HEK293T (cell line): ENCODE measurements at regions of chr2 and their contacts with region 1.

Region 1: GRCh38 chr2:88159955-88160415 is 10.2 kb upstream of the THNSL2 start:
- DNase-seq: peak; percentile 68

Region 2: DNA sequence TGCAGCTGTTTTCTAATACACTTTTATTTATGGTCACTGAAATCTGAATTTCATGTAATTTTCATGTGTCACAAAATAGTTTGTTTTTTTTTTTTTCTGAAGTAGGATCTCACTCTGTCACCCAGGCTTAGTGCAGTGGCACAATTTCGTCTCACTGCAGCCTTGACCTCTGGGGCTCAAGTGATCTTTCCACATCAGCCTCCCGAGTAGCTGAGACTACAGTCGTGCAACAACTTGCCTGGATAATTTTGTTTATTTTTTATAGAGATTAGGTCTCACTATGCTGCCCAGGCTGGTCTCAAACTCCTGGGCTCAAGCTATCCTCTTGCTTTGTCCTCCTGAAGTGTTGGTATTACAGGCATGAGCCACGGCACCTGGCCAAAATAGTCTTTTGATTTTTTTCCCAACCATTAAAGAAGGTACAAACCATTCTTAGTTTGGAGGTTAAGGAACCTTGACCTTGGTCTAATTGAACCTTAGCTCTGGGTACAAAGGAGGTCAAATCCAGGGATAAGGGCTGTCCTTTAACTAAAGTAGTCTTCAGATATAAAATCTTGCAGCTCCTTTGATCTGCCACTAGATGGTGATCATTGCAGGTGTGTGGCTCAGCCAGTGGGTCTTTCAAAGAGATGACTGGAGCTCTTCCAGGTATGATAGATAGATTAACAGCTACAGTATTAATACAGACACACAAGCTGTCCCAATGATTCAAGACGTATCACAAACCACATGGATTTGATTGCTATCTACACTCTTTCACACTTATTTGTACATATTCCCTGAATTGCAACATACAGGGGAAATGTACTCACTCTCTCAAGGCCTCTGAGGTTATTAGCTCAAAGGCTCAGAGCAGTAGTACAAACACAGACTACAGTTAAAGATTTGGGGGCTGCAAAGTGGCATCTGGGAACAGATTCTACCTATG is 99.7 kb before region 1 on chr2:
- CTCF ChIA-PET with region 1: interaction called, 22 read pairs
- POLR2A ChIA-PET with region 1: interaction called, 4 read pairs
- DNase-seq: peak; percentile 53

Region 3: GRCh38 chr2:88144914-88145497 is 15.0 kb before region 1 on chr2:
- CTCF ChIA-PET with region 1: no interaction called
- POLR2A ChIA-PET with region 1: no interaction called
- DNase-seq: no peak